ENCODE measurements at regions of chr20 and their contacts with region 1.

Region 1: GRCh38 chr20:14189794-14190402 is 147.5 kb downstream of the FLRT3 start:
- DNase-seq: peak in 1 of 2 experiments; percentile 2
- H3K4me3 ChIP-seq: no peak overlapping the region
- H3K27ac ChIP-seq: no peak overlapping the region
- H3K4me1 ChIP-seq: no peaks in the 10 kb centered on the region
- H3K27me3 ChIP-seq: no peaks in the 10 kb centered on the region
- CTCF ChIP-seq: peak; percentile 61; the same call in 1 of the 2 replicates

Region 2: GRCh38 chr20:13831476-13831875 is 358.4 kb before region 1 on chr20:
- CTCF ChIA-PET with region 1: no interaction called
- POLR2A ChIA-PET with region 1: no interaction called
- intact Hi-C with region 1: no loop called
- DNase-seq: no peak
- H3K4me3 ChIP-seq: no peak overlapping the region
- H3K27ac ChIP-seq: no peak overlapping the region
- H3K4me1 ChIP-seq: no peaks in the 10 kb centered on the region
- H3K27me3 ChIP-seq: no peaks in the 10 kb centered on the region
- CTCF ChIP-seq: no peak

Region 3: DNA sequence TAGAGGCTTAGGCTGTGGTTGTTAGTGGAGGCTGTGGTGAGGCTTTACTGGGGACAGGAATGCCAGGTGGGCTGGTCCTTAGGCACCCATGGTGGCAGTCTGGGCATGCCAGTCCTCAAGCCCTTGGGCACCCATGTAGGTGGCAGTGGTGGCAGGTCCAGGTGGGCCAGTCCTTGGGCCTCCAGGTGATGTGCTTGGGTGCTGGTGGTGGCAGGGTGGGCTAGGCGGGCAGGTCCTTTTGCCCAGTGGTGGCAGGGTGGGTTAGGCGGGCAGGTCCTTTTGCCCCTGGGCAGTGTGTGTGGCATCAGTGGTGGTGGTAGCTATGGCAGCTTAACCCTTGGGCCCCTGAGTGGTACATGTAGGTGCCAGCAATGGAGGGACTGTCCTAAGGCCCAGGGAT is 13.8 kb after region 1 on chr20:
- CTCF ChIA-PET with region 1: interaction called, 10 read pairs
- POLR2A ChIA-PET with region 1: no interaction called
- intact Hi-C with region 1: no loop called
- DNase-seq: no peak
- H3K4me3 ChIP-seq: no peak overlapping the region
- H3K27ac ChIP-seq: no peak overlapping the region
- H3K4me1 ChIP-seq: peaks cover 8% of the 10 kb centered on the region; the same call in 1 of the 2 replicates
- H3K27me3 ChIP-seq: no peaks in the 10 kb centered on the region
- CTCF ChIP-seq: no peak

Region 4: DNA sequence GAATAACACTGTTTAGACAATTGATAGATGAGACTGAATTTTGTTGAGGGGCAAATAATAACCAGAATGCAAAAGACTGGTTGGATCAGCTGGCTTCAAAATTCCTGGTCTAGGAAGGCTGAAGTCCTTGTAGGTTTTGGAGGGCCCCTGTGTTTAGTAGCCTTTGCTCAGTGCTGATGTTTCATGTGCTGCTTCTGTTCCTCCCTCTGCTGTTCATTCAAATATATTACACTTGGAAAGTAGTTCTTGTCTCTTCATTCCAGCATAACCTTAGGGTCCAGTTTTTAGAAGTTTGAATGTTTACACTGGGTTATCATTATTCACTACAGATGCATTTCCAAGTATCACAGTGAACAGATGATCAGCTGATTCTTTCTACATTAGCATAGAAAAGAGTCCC is 75.0 kb after region 1 on chr20:
- CTCF ChIA-PET with region 1: interaction called, 13 read pairs
- POLR2A ChIA-PET with region 1: no interaction called
- intact Hi-C with region 1: loop called (anchors 2 kb)
- DNase-seq: no peak
- H3K4me3 ChIP-seq: no peak overlapping the region
- H3K27ac ChIP-seq: no peak overlapping the region
- H3K4me1 ChIP-seq: 0 out of 2 replicates have a peak, but pooled peaks cover 2% of the 10 kb centered on the region
- H3K27me3 ChIP-seq: no peaks in the 10 kb centered on the region
- CTCF ChIP-seq: peak; percentile 56

Region 5: GRCh38 chr20:14319704-14320103 is 129.8 kb after region 1 on chr20:
- CTCF ChIA-PET with region 1: interaction called, 18 read pairs
- POLR2A ChIA-PET with region 1: interaction called, 5 read pairs
- intact Hi-C with region 1: no loop called
- DNase-seq: no peak
- H3K4me3 ChIP-seq: no peak overlapping the region
- H3K27ac ChIP-seq: no peak overlapping the region
- H3K4me1 ChIP-seq: no peaks in the 10 kb centered on the region
- H3K27me3 ChIP-seq: no peaks in the 10 kb centered on the region
- CTCF ChIP-seq: no peak

Region 6: GRCh38 chr20:15236812-15237211 is 1046.9 kb after region 1 on chr20:
- CTCF ChIA-PET with region 1: no interaction called
- POLR2A ChIA-PET with region 1: no interaction called
- intact Hi-C with region 1: loop called (anchors 5 kb)
- DNase-seq: peak; percentile 29 to 38
- H3K4me3 ChIP-seq: no peak overlapping the region
- H3K27ac ChIP-seq: no peak overlapping the region
- H3K4me1 ChIP-seq: no peaks in the 10 kb centered on the region
- H3K27me3 ChIP-seq: no peaks in the 10 kb centered on the region
- CTCF ChIP-seq: peak; percentile 61

Measured in PC-9 (cell line).